Caco-2 (cell line): ENCODE measurements at regions of chr3 and their contacts with region 1.

Region 1: GRCh38 chr3:188064831-188065493 is 89.0 kb upstream of the LPP start:
- DNase-seq: peak in 1 of 2 experiments; percentile 37
- H3K4me3 ChIP-seq: no peak overlapping the region
- H3K4me3 Mint-ChIP-seq: no peak overlapping the region
- H3K27ac Mint-ChIP-seq: peak overlapping the region; percentile 63
- H3K4me1 ChIP-seq: peaks cover 43% of the 10 kb centered on the region
- H3K4me1 Mint-ChIP-seq: peaks cover 23% of the 10 kb centered on the region
- H3K27me3 ChIP-seq: no peaks in the 10 kb centered on the region
- H3K27me3 Mint-ChIP-seq: no peaks in the 10 kb centered on the region
- CTCF ChIP-seq: no peak

Region 2: DNA sequence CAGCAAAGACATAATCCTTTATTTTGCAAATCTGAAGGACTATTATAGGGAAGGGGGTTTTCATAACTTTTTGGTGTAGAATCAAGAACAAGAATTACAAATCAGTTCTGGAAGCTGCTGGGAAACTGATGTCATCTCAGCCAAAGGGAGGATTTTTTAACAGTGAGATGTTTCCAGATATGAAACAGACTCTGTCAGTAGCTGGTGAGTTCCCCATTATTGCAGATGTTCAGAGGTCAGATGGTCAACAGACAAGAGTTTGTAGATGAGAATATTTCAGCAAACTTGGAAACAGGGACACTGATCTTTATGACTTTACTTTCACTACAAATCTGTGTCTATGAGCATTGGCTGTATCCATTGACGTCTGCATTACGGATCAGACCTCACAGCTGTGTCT is 17.1 kb after region 1 on chr3:
- CTCF ChIA-PET with region 1: no interaction called
- POLR2A ChIA-PET with region 1: no interaction called
- intact Hi-C with region 1: loop called (anchors 2 kb)
- DNase-seq: no peak
- H3K4me3 ChIP-seq: no peak overlapping the region
- H3K4me3 Mint-ChIP-seq: no peak overlapping the region
- H3K27ac Mint-ChIP-seq: no peak overlapping the region
- H3K4me1 ChIP-seq: peaks cover 34% of the 10 kb centered on the region
- H3K4me1 Mint-ChIP-seq: peaks cover 47% of the 10 kb centered on the region
- H3K27me3 ChIP-seq: no peaks in the 10 kb centered on the region
- H3K27me3 Mint-ChIP-seq: no peaks in the 10 kb centered on the region
- CTCF ChIP-seq: no peak

Region 3: DNA sequence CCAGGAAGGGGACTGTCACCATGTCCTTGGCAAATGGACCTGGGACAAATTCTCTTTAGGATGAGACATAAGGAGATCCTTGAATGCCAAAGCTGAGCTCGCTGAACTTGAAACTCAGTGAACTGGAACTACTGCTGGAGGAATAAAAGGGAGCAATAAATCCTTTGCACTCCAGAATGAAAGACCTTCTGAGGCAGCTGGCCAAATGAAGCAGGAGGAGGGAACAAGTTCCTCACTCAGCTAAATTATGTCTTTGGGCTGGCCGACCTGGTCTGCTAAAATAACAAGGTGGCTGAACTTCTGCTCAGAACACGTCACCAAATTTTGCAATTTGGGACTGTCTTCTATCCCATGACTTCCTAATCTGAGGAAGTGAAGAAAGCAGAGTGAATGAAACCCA is 403.7 kb after region 1 on chr3:
- CTCF ChIA-PET with region 1: no interaction called
- POLR2A ChIA-PET with region 1: no interaction called
- intact Hi-C with region 1: no loop called
- DNase-seq: no peak
- H3K4me3 ChIP-seq: no peak overlapping the region
- H3K4me3 Mint-ChIP-seq: no peak overlapping the region
- H3K27ac Mint-ChIP-seq: no peak overlapping the region
- H3K4me1 ChIP-seq: peaks cover 2% of the 10 kb centered on the region; the same call in 1 of the 2 replicates
- H3K4me1 Mint-ChIP-seq: peaks cover 12% of the 10 kb centered on the region
- H3K27me3 ChIP-seq: no peaks in the 10 kb centered on the region
- H3K27me3 Mint-ChIP-seq: no peaks in the 10 kb centered on the region
- CTCF ChIP-seq: no peak